Mammary epithelial cell (primary cell): ENCODE measurements at regions of chrX and their contacts with region 1.

Region 1: DNA sequence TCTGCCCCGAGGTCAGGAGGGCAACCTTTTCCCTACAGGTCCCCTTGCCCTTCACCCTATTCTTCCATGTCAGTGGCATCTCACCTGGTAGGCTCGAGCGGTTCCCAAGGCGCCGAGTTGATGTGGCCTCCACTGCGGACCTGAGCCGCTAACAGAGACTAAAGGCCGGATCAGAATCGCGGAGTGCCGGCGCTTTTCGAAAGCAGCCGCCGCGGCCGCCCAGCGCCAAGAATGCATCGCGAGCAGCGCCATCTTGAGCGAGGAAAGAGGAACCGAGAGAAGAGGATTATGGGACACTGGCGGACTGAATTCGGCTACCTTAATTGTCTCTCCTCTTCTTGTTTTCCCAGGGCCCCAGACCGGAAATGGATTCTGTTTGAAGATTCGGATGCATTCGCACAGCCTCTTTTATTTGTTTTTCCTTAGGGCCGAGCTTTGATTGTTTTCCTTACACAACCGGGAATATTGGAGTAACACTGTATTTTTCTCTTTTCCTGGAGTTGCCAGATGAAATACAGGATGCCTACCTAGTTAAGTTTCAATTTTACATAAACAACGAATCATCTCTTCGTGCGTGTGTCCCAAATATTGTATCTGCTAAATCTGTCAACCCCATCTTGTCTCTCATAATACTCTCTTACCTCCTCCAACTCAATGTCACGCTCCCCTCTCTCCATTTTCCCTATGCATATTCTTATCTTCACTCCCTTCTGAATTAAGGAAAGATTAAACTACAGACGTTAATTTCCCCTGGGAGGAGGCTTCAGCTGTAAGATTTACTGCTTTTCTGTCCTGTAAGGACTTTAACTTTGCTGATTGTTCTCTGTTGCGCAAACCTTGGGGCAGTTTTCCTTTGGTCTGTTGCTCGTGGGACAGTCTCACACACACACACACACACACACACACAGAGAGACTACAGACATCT is at the start of gene ABCB7:
- DNase-seq: peak; percentile 64
- H3K4me3 ChIP-seq: peak within 1 kb of the TSS; percentile 50 to 72 (median 67)
- H3K27ac ChIP-seq: peak within 1 kb of the TSS; percentile 66
- H3K4me1 ChIP-seq: no peaks in the 10 kb centered on the region
- H3K27me3 ChIP-seq: no peaks in the 10 kb centered on the region
- CTCF ChIP-seq: peak in 1 of 2 donors; percentile 32
- total RNA-seq, gene ABCB7: 13.5 to 18.2 TPM

Region 2: DNA sequence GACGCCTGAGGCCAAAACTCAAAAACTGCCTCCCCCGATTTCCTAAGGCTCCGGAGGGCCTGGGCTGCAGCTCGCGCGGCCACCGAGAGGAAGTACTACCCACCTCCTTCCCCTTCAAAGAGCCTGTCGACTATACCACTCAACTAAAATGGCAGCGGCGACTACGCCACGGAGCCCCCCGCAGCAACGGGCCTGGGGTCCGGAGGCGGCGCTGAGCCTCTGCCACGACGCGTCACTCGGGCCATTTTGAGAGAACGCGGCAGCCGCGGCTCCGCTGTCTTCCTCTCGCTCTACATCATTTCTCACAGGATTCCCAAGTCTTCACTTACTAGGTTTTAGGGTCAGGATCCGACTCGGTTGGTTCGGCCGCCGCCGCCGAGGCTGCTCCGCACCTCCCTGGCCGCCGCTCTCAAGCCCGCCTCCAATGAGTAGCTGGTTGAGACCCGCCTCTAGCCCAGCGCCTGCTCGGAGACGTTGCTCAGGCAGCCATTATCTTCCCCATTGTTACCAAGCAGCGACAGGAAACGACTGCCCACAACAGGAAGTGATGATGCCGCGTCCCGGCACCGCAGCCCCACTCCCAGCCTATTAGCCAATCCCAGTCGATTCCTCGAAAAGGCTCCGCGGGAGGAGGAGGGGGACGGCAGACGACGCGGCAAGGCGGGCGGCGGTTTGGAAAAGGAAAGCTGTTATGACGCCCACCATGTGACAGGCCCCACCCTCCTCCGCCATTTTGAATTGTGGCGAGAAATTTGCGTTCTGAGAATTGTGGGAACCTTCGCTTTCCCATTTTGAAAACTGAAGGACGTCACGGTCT is 542.0 kb before region 1 on chrX and contains the start of gene RLIM:
- CTCF ChIA-PET with region 1: no interaction called
- dilution Hi-C with region 1: no loop called
- in situ Hi-C with region 1: no loop called
- intact Hi-C with region 1: loop called (anchors 5 kb)
- DNase-seq: peak; percentile 92
- H3K4me3 ChIP-seq: peak within 1 kb of the TSS; percentile 59 to 76 (median 65)
- H3K27ac ChIP-seq: peak within 1 kb of the TSS; percentile 91
- H3K4me1 ChIP-seq: no peaks in the 10 kb centered on the region
- H3K27me3 ChIP-seq: no peaks in the 10 kb centered on the region
- CTCF ChIP-seq: no peak
- total RNA-seq, gene RLIM: 46.1 to 50.3 TPM

Region 3: DNA sequence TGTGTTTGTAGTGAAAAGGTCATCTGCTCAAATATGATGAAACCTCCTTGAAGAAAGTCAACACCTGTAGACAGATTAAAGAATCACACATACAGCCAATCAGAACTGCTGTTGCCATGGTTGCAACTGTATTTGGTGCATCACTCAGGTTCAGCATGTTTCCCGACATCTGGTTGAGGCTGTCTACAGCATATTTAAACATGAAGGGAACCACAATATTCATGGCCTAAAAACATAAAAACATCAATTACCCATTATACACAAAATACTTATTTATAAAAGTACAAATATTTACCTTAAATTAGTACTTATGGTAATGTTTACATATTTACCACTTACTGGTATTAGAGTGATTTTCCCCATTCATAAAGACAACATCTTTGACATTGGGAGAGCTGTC is 79.9 kb before region 1 on chrX:
- CTCF ChIA-PET with region 1: no interaction called
- dilution Hi-C with region 1: no loop called
- in situ Hi-C with region 1: no loop called
- intact Hi-C with region 1: no loop called
- DNase-seq: no peak
- H3K4me3 ChIP-seq: no peak overlapping the region
- H3K27ac ChIP-seq: no peak overlapping the region
- H3K4me1 ChIP-seq: no peaks in the 10 kb centered on the region
- H3K27me3 ChIP-seq: no peaks in the 10 kb centered on the region
- CTCF ChIP-seq: no peak

Region 4: DNA sequence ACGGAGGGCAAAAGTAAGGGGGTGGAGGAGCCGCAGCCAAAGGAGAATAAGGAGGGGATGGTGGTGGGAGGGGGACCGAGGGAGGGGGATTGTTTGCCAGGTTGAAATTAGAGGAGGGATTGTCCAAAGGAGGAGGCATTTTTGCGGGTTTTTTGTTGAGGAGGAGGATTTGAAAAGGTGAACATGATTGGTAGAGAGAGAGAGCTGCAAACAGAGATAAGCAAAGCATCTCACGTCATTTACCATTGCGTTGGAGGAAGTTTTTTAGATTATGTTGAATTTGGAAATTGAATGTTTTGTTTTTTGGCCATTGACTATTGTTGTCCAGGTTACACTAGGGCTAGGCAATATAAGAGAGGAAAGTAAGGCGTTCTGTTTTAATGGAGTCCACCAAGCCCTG is 54.3 kb after region 1 on chrX:
- CTCF ChIA-PET with region 1: no interaction called
- dilution Hi-C with region 1: no loop called
- in situ Hi-C with region 1: no loop called
- intact Hi-C with region 1: no loop called
- DNase-seq: no peak
- H3K4me3 ChIP-seq: no peak overlapping the region
- H3K27ac ChIP-seq: no peak overlapping the region
- H3K4me1 ChIP-seq: no peaks in the 10 kb centered on the region
- H3K27me3 ChIP-seq: no peaks in the 10 kb centered on the region
- CTCF ChIP-seq: no peak